ENCODE measurements at regions of chr11 and their contacts with region 1.

Region 1: GRCh38 chr11:10455637-10456487 is 798 bp downstream of the AMPD3 start:
- DNase-seq: peak; percentile 92
- H3K4me3 Mint-ChIP-seq: peak overlapping the region; percentile 96
- H3K27ac Mint-ChIP-seq: peak overlapping the region; percentile 94
- H3K4me1 Mint-ChIP-seq: peaks cover 69% of the 10 kb centered on the region
- H3K27me3 Mint-ChIP-seq: peaks cover 8% of the 10 kb centered on the region

Region 2: GRCh38 chr11:8688414-8689362 is 1767.2 kb before region 1 on chr11:
- intact Hi-C with region 1: loop called (anchors 10 kb)
- DNase-seq: peak; percentile 96
- H3K4me3 Mint-ChIP-seq: peak overlapping the region; percentile 94
- H3K27ac Mint-ChIP-seq: peak overlapping the region; percentile 88
- H3K4me1 Mint-ChIP-seq: peaks cover 43% of the 10 kb centered on the region
- H3K27me3 Mint-ChIP-seq: no peaks in the 10 kb centered on the region

Region 3: DNA sequence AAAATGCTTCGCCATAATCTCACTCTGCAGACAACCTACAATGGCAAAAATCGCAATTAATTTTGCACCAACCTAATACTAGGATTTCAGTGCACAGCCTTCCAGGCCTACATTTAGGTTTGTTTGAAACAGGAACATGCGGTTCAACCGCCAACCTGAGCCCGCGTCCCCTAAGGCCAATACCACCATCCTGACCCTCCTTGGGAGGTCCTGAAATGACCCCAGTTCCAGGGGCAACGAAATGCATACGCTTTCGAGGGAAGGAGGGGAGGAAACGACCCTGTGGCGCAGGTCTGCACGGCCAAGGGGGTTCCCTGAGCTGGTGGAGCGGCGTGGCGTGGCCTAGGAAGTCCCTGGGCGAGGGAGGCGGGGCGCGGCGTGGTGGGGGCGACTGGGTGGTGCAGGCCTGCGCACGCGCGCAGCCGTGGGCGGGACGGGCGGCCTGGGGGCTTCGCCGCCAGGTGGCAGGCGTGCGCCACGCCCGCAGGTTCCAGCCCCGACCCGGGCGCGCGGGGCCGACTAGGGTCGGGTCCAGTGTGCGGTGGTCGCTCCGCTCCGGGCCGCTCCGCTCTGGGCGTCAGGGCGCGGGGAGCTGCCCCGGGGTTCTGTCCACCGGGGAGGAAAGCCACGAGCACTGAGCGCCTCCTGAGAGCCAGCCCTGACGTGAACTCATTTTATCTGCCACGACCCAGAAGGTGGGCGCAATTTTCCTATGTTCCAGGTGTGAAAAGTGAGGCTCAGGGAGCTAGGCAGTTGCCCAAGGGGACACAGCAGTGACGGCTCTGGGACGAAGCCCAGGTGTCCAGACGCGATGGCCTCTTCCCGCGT is 697.8 kb before region 1 on chr11:
- intact Hi-C with region 1: loop called (anchors 5 kb)
- DNase-seq: peak; percentile 98
- H3K4me3 Mint-ChIP-seq: peak overlapping the region; percentile 83
- H3K27ac Mint-ChIP-seq: peak overlapping the region; percentile 89
- H3K4me1 Mint-ChIP-seq: peaks cover 56% of the 10 kb centered on the region
- H3K27me3 Mint-ChIP-seq: peaks cover 2% of the 10 kb centered on the region

Region 4: DNA sequence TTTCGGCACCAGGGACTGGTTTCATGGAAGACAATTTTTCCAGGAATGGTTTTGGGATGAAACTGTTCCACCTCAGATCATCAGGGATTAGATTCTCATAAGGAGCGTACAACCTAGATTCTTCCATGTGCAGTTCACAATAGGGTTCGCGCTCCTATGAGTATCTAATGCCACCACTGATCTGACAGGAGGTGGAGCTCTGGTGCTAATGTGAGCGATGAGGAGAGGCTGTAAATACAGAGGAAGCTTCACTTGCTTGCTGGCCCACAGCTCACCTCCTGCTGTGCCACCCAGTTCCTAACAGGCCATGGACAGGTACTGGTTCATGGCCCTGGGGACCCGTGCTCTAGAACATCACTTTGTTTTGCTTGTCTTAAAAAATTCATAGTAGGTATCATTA is 42.6 kb before region 1 on chr11:
- intact Hi-C with region 1: loop called (anchors 5 kb)
- DNase-seq: peak; percentile 83
- H3K4me3 Mint-ChIP-seq: no peak overlapping the region
- H3K27ac Mint-ChIP-seq: no peak overlapping the region
- H3K4me1 Mint-ChIP-seq: peaks cover 32% of the 10 kb centered on the region
- H3K27me3 Mint-ChIP-seq: peaks cover 10% of the 10 kb centered on the region

Region 5: DNA sequence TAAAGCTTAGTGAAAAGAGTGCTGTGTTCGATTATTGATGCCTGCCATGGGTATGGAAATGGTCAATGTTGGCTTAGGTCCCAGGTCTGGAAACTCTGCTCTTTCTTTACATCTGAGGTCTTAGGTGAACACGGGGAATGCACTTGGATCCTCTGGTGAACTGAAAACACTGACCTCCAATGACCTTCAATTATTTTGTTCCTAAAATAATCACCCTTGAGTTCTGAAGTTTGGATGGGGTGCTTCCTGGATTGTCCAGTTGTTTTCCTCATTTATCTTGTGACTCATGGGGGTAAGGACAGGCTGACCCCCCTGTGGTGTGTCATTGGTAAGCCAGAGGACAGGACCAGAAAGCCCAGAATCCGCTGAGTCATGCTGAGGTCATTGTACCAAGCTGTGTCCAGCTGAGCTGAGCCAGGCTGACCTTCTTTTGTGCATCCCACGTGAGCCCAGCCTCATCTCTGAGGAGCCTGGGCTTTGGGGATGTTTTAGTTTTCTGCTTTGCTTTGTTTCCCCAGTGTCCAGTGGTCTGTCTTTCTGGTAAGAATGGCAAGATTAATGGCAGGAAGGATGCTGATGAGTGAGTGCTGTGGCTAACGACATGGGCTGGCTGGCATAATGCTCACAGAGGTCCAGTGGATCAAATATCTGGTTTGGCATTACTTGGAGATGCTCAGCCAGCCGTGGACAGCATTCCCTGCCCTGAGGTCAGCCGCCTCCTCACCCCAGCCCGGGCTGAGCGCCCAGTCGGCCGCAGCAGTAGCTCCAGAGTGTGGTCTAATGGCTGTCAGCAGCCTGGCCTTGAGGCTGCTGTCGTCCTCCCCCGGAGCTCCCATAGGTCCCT is 34.8 kb after region 1 on chr11:
- intact Hi-C with region 1: no loop called
- DNase-seq: no peak
- H3K4me3 Mint-ChIP-seq: no peak overlapping the region
- H3K27ac Mint-ChIP-seq: no peak overlapping the region
- H3K4me1 Mint-ChIP-seq: peaks cover 15% of the 10 kb centered on the region
- H3K27me3 Mint-ChIP-seq: no peaks in the 10 kb centered on the region

Region 6: DNA sequence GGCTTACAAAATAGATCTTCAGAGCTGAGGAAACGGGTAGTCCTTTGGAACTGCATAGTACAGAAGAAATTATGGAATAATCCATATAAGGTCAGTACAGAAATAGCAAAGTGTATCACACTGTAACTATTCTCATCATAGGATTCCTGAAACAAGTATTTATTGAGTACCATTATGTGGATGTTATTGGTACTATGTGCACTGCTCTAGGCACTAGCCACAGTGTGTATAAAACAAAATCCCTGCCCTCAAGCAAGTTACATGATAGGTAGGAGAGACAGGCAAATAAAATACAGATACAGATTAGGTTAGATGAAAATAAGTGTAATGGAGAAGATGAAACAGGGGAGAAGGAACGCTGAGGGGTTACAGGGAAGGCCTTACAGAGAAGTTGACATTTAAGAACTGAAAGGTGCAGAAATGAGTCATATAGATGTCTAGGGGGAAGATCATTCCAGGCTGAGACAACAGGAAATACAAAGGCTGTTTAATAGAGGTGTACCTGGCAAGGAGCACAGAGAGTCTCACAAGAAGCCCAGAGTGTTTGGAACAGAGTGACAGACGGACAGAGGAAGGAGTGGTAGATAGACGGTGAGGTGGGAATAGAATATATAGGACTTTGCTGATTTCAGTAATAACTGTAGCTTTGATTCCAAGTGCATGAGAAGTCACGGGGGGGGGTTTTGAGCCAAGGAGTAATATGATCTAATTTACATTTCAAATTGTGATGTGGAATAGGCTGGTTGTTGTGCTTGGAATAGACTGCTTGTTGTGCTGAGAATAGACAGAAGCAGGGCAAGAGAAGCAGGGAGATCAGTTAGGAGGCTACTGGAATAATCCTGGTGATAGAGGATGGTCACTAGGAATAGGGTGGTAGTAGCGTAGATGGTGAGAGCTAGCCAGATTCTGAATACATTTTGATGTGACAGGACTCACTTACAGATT is 71.4 kb after region 1 on chr11:
- intact Hi-C with region 1: loop called (anchors 5 kb)
- DNase-seq: no peak
- H3K4me3 Mint-ChIP-seq: peak overlapping the region; percentile 30
- H3K27ac Mint-ChIP-seq: peak overlapping the region; percentile 53
- H3K4me1 Mint-ChIP-seq: peaks cover 18% of the 10 kb centered on the region
- H3K27me3 Mint-ChIP-seq: no peaks in the 10 kb centered on the region

Region 7: DNA sequence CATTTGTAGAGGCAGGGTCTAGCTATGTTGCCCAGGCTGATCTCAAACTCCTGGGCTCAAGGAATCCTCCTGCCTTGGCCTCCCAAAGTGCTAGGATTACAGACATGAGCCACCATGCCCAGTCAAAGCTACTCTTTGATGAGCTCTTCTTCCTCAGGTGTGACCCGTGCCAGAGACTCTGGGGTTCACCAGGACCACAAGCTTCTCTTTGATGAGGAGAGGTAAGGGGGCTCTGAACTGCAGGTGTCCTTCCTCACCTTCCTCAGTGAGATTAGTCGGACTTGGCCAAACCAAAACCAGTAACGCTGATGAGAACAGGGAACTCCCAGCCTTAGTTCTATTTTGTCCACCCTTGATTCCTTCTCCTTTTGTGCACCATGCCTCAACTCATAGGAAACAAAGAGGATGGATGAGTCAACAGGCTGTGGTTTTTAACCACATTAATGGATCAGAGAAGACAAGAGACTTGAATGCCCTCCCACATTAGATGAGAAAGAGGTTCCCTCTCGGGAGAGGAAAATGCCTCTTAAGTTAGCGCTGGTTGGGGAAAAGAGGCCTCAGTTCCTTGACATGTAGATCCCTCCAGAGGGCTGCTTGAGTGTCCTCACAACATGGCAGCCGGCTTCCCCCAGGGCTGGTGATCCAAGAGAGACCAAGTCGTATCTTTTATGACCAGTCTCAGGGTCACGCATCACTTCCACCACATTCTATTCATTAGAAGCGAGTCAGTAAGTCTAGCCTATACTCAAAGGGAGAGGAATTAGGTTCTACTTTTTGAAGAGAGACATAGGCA is 269.4 kb after region 1 on chr11:
- intact Hi-C with region 1: loop called (anchors 5 kb)
- DNase-seq: peak; percentile 71
- H3K4me3 Mint-ChIP-seq: peak overlapping the region; percentile 65
- H3K27ac Mint-ChIP-seq: peak overlapping the region; percentile 88
- H3K4me1 Mint-ChIP-seq: peaks cover 22% of the 10 kb centered on the region
- H3K27me3 Mint-ChIP-seq: peaks cover 37% of the 10 kb centered on the region

Region 8: DNA sequence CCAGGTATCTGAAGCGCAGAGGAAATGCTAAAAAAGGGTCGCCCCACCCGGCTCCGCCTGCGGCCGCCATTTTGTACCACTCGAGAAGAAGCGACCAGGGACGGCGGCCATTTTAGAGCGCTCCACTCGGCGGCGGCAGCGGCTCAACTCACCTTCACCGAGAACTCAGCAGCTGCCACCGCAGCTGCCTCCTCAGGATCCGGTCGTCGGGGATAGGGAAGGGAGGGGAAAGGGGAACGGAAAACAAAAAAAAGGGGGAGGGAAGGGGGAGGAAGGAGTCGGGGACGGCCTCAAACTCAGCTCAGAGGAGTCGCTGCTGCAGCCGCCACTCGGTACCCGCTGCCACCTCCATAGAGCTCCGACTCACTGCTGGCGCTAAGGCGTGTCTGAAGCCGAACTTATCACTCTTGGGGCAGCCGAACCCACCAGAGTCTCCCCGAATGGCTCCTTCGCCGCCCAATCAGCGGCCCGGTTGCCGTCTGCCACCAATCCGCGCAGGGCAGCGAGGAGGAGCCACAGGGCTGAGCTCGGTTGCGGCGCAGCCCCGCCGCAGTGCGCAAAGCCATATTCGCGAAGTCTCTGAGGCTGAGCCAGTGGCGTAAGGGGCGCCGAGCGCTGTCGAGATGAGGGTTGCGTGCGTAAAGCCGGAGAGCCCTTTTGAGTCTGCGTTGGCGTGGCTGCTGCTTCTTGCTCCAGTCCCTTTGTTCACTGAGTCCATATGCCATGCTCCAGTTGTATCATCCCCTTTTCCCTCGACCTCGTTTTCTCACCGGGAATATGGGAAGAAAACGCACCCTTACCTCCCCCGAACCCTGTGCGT is 352.9 kb after region 1 on chr11 and contains the start of gene EIF4G2:
- intact Hi-C with region 1: loop called (anchors 5 kb)
- DNase-seq: peak; percentile 99
- H3K4me3 Mint-ChIP-seq: peak within 1 kb of the TSS; percentile 95
- H3K27ac Mint-ChIP-seq: peak within 1 kb of the TSS; percentile 98
- H3K4me1 Mint-ChIP-seq: peaks cover 31% of the 10 kb centered on the region
- H3K27me3 Mint-ChIP-seq: no peaks in the 10 kb centered on the region
- total RNA-seq, gene EIF4G2: 1,071 and 1,120 TPM in 2 replicates

Measured in activated CD4-positive, alpha-beta T cell treated with anti-CD3 and anti-CD28 coated beads, Interleukin-2, amount 10 ng/mL, durations not matched to agents 24 days and 14 days (primary cell).